Activated CD8-positive, alpha-beta T cell treated with anti-CD3 and anti-CD28 coated beads, Interleukin-2, amount 10 ng/mL, durations not matched to agents 7 days and 5 days (primary cell): ENCODE measurements at regions of chr9 and their contacts with region 1.

Region 1: GRCh38 chr9:22052376-22052945 is 43.4 kb upstream of the CDKN2B start:
- DNase-seq: peak; percentile 65
- ATAC-seq: peak; percentile 72
- H3K4me3 Mint-ChIP-seq: peak overlapping the region; percentile 9
- H3K27ac Mint-ChIP-seq: peak overlapping the region; percentile 77
- H3K4me1 Mint-ChIP-seq: peaks cover 75% of the 10 kb centered on the region
- H3K27me3 Mint-ChIP-seq: peaks cover 5% of the 10 kb centered on the region

Region 2: GRCh38 chr9:22037954-22038690 is 14.3 kb before region 1 on chr9:
- CTCF ChIA-PET with region 1: interaction called, 112 read pairs
- POLR2A ChIA-PET with region 1: no interaction called
- DNase-seq: no peak
- ATAC-seq: no peak
- H3K4me3 Mint-ChIP-seq: no peak overlapping the region
- H3K27ac Mint-ChIP-seq: no peak overlapping the region
- H3K4me1 Mint-ChIP-seq: peaks cover 58% of the 10 kb centered on the region
- H3K27me3 Mint-ChIP-seq: peaks cover 14% of the 10 kb centered on the region

Region 3: DNA sequence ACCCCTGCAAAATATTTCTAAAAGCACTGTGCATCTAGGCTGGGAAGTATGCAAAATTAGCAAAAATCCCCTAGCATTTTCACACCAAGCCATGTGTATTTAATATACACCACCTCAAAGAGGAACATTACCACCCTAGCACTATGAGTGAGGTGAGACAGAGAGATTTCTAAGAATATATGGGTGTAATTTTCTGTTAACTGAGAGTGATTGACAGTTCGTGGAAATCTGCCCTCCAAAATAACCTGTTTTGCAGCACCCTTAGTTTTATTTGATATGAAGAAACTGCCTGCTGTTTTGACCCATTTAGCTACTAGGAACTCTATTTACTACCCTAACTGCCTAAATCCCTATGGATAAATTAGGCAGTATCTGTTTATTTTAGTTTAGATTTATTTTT is 20.9 kb after region 1 on chr9:
- CTCF ChIA-PET with region 1: interaction called, 25 read pairs
- POLR2A ChIA-PET with region 1: interaction called, 3 read pairs
- DNase-seq: peak; percentile 64
- ATAC-seq: peak; percentile 89
- H3K4me3 Mint-ChIP-seq: no peak overlapping the region
- H3K27ac Mint-ChIP-seq: peak overlapping the region; percentile 63
- H3K4me1 Mint-ChIP-seq: peaks cover 73% of the 10 kb centered on the region
- H3K27me3 Mint-ChIP-seq: no peaks in the 10 kb centered on the region

Region 4: DNA sequence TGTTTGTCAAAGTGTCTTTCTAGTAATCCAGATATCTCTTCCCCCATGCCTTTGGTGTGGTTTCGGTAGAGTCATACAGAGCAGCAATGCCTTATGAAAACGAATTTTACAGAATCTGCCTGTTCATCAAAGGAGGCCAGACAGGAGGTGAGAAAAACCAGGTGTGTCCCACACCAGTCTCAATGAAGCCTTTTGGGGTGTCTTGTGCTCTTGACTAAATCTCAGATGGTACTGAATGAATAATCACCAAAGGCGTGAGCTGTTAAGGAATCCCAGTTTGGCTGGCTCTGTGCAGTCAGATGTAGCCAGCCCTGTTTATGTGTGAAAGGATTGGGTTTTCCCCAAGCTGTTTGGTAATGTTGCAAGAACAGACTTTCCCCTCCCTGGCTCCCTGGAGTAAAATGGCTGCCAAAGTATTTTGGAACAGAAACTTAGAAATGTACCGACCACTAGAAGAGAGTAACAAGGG is 27.4 kb after region 1 on chr9:
- CTCF ChIA-PET with region 1: interaction called, 25 read pairs
- POLR2A ChIA-PET with region 1: interaction called, 5 read pairs
- DNase-seq: peak; percentile 82
- ATAC-seq: peak; percentile 94
- H3K4me3 Mint-ChIP-seq: peak overlapping the region; percentile 7
- H3K27ac Mint-ChIP-seq: peak overlapping the region; percentile 84
- H3K4me1 Mint-ChIP-seq: peaks cover 66% of the 10 kb centered on the region
- H3K27me3 Mint-ChIP-seq: peaks cover 7% of the 10 kb centered on the region

Region 5: GRCh38 chr9:22238809-22239684 is 186.6 kb after region 1 on chr9:
- CTCF ChIA-PET with region 1: interaction called, 19 read pairs
- POLR2A ChIA-PET with region 1: no interaction called
- DNase-seq: no peak
- ATAC-seq: peak; percentile 36
- H3K4me3 Mint-ChIP-seq: no peak overlapping the region
- H3K27ac Mint-ChIP-seq: peak overlapping the region; percentile 14
- H3K4me1 Mint-ChIP-seq: peaks cover 48% of the 10 kb centered on the region
- H3K27me3 Mint-ChIP-seq: peaks cover 17% of the 10 kb centered on the region